ENCODE measurements at regions of chr9 and their contacts with region 1.

Region 1: GRCh38 chr9:126376311-126377175 is 49.9 kb downstream of the MVB12B start:
- DNase-seq: no peak
- ATAC-seq: peak; percentile 48
- H3K4me3 ChIP-seq: no peak overlapping the region
- H3K27ac ChIP-seq: no peak overlapping the region
- H3K4me1 ChIP-seq: peaks cover 13% of the 10 kb centered on the region
- H3K27me3 ChIP-seq: no peaks in the 10 kb centered on the region
- CTCF ChIP-seq: no peak
- POLR2A ChIP-seq: no peak
- RAD21 ChIP-seq: no peak

Region 2: DNA sequence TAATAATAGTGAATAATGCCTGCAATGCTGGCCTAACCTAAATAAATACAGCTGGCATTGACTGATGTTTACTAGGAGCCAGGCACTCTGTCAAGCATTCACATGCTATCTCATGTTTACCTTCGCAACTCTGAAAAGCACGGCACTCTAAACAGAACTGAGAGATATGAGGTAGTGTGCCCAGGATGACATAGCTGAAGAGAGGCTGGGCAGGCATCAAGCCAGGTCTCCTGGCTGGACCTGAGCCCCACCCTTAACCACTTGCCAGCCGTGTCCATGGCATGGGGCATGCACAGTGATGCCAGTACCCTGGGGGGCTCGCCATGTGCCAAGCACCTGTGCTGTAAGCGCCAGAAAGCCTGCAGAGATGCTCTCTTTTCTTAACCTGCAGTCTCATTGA is 169.3 kb before region 1 on chr9:
- CTCF ChIA-PET with region 1: no interaction called
- POLR2A ChIA-PET with region 1: no interaction called
- dilution Hi-C with region 1: no loop called
- in situ Hi-C with region 1: no loop called
- intact Hi-C with region 1: no loop called
- DNase-seq: no peak
- ATAC-seq: no peak
- H3K4me3 ChIP-seq: no peak overlapping the region
- H3K27ac ChIP-seq: no peak overlapping the region
- H3K4me1 ChIP-seq: no peaks in the 10 kb centered on the region
- H3K27me3 ChIP-seq: peaks cover 17% of the 10 kb centered on the region
- CTCF ChIP-seq: no peak
- POLR2A ChIP-seq: no peak
- RAD21 ChIP-seq: no peak

Region 3: DNA sequence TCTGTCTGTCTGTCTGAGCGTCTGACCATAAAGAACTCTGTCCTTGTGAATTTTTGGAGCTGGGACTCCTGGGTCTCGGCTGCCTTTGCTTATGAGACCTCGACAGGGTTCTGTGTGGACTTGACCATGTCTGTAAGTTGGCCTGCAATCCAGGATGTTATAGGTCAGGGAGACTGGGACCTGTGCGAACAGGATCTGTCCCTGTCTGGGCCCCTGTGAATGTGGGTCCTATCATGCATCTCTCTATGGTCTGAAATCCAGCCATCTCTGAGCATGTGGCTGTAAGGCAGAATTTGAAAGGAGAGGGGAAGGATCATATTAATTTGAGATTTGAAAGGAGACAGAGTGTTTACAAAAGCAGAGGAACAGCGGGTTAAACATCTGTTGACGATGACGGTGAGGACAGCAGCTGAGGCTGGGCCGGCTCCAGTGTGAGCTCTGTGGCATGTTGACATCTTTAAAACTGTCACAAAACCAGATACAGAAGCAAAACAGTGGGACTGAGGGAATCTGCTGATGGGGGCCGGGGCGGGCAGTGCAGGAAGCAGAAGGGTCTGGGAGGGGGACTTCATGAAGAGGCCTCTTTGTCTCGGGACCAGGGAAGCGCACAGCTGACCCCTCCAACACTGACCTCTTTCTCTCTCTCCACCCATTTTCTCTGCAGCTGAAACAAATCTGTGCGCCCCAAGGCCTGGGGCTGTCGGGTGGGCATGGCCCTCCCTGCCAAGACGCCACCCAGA is 69.1 kb before region 1 on chr9:
- CTCF ChIA-PET with region 1: no interaction called
- POLR2A ChIA-PET with region 1: no interaction called
- dilution Hi-C with region 1: no loop called
- in situ Hi-C with region 1: no loop called
- intact Hi-C with region 1: no loop called
- DNase-seq: no peak
- ATAC-seq: no peak
- H3K4me3 ChIP-seq: no peak overlapping the region
- H3K27ac ChIP-seq: no peak overlapping the region
- H3K4me1 ChIP-seq: no peaks in the 10 kb centered on the region
- H3K27me3 ChIP-seq: peaks cover 44% of the 10 kb centered on the region
- CTCF ChIP-seq: no peak
- POLR2A ChIP-seq: no peak
- RAD21 ChIP-seq: no peak

Region 4: DNA sequence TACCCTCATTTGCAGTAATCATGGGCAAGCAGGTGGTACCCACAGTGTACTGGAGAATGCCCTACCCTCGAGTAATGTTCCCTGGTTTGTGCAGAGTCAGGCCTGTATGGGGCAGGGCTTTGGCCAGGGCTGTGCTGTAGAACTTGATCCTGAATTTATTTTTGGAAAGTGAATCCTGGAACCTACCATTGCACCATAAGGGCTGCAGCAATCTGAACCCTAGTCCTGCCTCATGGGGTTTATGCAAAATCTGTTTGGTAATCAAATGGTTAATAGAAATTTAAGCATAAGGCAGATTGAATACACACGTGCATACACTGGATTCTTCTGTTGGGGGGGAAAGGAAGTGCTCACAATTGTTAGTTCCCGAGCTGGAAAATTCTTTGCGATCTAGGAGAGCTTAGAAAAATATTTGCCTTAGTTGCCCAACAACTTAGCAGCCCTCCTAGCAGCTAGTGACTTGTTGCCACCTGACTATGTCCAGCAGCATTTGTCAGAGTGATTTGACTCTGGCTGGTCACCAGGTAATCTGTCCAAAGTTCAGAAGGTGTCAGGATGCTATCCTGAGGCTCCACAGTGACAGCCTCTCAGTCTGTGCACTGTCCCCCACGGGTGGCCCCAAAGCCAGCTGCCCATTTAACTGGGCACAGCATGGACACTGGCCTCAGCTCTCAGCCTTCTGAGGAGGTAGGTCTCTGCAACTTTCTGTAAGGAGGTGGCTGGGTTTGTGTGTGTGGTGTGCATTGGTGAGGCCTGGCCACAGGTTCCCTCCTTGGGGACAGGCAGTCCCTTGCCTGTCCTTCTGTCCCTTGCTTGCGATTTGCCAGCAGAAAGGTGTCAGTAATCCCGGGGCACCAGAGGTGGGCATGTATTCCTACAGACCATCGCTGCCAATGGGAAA is 41.6 kb before region 1 on chr9:
- CTCF ChIA-PET with region 1: no interaction called
- POLR2A ChIA-PET with region 1: no interaction called
- dilution Hi-C with region 1: no loop called
- in situ Hi-C with region 1: no loop called
- intact Hi-C with region 1: loop called (anchors 2 kb)
- DNase-seq: peak; percentile 33
- ATAC-seq: peak; percentile 82
- H3K4me3 ChIP-seq: no peak overlapping the region
- H3K27ac ChIP-seq: no peak overlapping the region
- H3K4me1 ChIP-seq: peaks cover 9% of the 10 kb centered on the region
- H3K27me3 ChIP-seq: no peaks in the 10 kb centered on the region
- CTCF ChIP-seq: no peak
- POLR2A ChIP-seq: no peak
- RAD21 ChIP-seq: no peak

Region 5: GRCh38 chr9:126420643-126421577 is 44.4 kb after region 1 on chr9:
- CTCF ChIA-PET with region 1: no interaction called
- POLR2A ChIA-PET with region 1: no interaction called
- dilution Hi-C with region 1: no loop called
- in situ Hi-C with region 1: no loop called
- intact Hi-C with region 1: no loop called
- DNase-seq: peak; percentile 58
- ATAC-seq: peak; percentile 59; the same call in 1 of the 2 replicates
- H3K4me3 ChIP-seq: no peak overlapping the region
- H3K27ac ChIP-seq: no peak overlapping the region
- H3K4me1 ChIP-seq: no peaks in the 10 kb centered on the region
- H3K27me3 ChIP-seq: no peaks in the 10 kb centered on the region
- CTCF ChIP-seq: no peak
- POLR2A ChIP-seq: no peak
- RAD21 ChIP-seq: no peak